ENCODE measurements at regions of chr21 and their contacts with region 1.

Region 1: DNA sequence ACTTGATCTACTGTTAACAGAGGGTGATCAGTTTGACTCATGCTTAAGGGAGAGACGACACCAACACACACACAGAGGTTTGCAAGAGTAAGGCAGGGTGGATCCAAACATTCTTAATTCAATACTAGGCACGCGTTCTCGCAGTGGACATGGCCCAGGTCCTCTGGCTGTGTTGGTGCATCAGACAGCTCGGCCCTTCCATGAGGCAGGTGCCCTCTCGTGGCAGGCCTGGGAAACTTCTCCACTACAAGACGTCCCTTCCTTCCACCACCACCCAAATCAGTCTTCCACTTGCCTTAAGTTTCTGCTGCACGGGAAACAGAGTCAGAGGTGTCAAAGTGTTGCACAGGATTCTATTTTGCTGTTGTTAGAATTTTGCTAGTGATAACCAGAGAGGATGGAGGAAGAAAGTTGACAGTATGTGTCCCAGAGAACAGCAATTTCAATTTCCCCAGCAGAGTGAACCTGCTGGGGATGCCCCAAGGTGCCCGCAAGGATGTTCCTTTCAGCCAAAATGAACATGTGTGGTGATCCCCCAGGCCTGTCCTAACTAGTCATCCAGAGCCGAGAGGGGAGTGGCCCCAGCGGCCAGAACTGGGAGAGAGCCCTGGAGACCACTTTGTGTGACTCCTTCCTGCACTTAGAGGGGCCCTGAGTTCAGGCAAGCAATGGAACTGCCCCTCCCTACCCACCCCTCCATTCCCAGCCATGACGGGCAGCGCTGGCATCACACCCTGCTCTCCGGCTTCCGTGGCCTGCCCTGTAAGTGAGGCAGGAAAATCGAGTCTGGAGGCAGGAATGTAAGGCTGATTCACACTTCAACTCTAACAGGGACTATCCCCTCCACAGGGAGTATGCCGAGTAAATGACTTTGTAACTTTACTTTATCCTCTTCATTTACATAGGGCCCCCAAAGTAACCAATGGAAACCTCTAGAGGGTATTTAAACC is 34.8 kb downstream of the MX1 start:
- DNase-seq: peak; percentile 57
- H3K4me3 Mint-ChIP-seq: no peak overlapping the region
- H3K27ac Mint-ChIP-seq: no peak overlapping the region
- H3K4me1 Mint-ChIP-seq: no peaks in the 10 kb centered on the region
- H3K27me3 Mint-ChIP-seq: no peaks in the 10 kb centered on the region
- CTCF ChIP-seq: peak; percentile 73

Region 2: GRCh38 chr21:41121785-41122421 is 338.9 kb before region 1 on chr21:
- CTCF ChIA-PET with region 1: interaction called, 4 read pairs
- POLR2A ChIA-PET with region 1: no interaction called
- intact Hi-C with region 1: loop called (anchors 1 kb)
- DNase-seq: peak; percentile 77
- H3K4me3 Mint-ChIP-seq: no peak overlapping the region
- H3K27ac Mint-ChIP-seq: no peak overlapping the region
- H3K4me1 Mint-ChIP-seq: no peaks in the 10 kb centered on the region
- H3K27me3 Mint-ChIP-seq: peaks cover 28% of the 10 kb centered on the region
- CTCF ChIP-seq: peak; percentile 88

Measured in MCF 10A (cell line).